Activated naive CD4-positive, alpha-beta T cell treated with anti-CD3 and anti-CD28 coated beads for 36 hours (primary cell): ENCODE measurements at regions of chr7 and their contacts with region 1.

Region 1: DNA sequence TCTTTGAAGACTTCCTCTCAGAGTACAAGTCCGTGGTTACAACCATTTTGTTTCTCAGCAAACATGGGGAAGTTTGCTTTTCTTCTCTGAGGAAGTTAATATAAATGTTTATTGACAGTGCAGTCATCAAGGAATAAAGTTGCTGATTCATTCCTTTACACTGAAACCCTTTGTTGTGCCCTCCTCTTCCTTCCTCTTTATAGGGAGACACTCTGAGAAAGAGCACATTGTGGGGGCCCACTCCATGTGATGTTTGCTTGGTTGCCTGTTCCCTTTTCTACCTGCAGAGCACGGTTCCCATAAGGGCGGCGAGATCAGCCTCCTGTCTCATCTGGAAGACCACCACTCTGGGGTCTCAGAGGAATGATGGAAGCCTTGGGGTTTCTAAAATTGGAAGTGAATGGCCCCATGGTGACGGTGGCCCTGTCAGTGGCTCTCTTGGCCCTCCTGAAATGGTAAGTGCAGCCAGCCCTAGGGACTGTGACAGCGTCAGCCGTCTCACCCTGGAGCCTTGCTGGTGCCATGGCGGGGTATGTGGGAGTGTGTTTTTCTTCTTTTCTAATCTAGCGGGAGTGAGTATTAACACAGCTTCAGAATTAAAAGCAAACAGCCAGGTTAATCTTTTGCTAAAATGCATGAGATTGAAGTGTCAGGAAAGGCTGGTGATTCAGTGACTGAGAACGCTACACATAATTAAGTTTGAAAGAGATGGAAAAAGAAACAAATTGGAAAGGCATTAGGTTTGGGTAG is at the start of gene TBXAS1:
- DNase-seq: peak; percentile 14
- H3K4me3 Mint-ChIP-seq: peak within 1 kb of the TSS; percentile 50
- H3K27ac Mint-ChIP-seq: peak within 1 kb of the TSS; percentile 77
- H3K4me1 Mint-ChIP-seq: peaks cover 24% of the 10 kb centered on the region
- H3K27me3 Mint-ChIP-seq: peaks cover 4% of the 10 kb centered on the region
- total RNA-seq, gene TBXAS1: 0.83 to 1.1 TPM

Region 2: GRCh38 chr7:139505563-139505962 is 323.6 kb before region 1 on chr7:
- CTCF ChIA-PET with region 1: no interaction called
- intact Hi-C with region 1: loop called (anchors 10 kb)
- DNase-seq: peak; percentile 50
- H3K4me3 Mint-ChIP-seq: no peak overlapping the region
- H3K27ac Mint-ChIP-seq: no peak overlapping the region
- H3K4me1 Mint-ChIP-seq: no peaks in the 10 kb centered on the region
- H3K27me3 Mint-ChIP-seq: no peaks in the 10 kb centered on the region

Region 3: GRCh38 chr7:139602143-139602722 is 227.0 kb before region 1 on chr7:
- CTCF ChIA-PET with region 1: interaction called, 4 read pairs
- intact Hi-C with region 1: loop called (anchors 1 kb)
- DNase-seq: no peak
- H3K4me3 Mint-ChIP-seq: no peak overlapping the region
- H3K27ac Mint-ChIP-seq: no peak overlapping the region
- H3K4me1 Mint-ChIP-seq: no peaks in the 10 kb centered on the region
- H3K27me3 Mint-ChIP-seq: no peaks in the 10 kb centered on the region

Region 4: DNA sequence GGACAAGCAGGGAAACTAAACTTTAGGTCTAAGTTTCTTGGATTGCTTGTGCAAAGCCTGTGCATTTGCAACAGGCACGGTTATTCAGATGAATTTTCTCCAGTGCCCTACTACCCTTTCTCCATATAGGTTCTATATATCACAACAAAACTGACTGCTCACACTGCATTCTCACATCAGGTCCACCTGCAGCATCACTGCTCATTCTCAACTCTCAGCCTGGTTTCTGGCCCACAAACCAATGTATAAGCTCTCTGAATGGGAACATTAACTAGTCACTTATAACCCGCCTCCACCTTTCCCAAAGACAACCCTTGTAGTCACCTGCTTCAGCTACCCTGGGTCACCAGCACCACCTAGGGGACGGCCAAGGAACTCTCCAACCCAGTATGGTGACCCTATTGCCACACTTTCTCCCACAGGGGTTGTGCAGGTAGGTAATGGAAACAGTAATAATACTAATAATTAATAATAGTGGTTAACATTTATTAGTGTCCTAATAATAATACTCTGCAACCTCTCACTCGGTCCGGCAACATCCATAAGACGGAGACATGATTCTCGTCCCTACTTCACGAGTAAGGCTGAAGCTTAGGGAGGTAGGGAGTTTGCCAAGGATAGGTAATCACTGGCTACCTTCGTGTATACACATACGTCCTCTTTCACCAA is 208.4 kb before region 1 on chr7:
- CTCF ChIA-PET with region 1: interaction called, 3 read pairs
- intact Hi-C with region 1: loop called (anchors 1 kb)
- DNase-seq: peak; percentile 77
- H3K4me3 Mint-ChIP-seq: no peak overlapping the region
- H3K27ac Mint-ChIP-seq: no peak overlapping the region
- H3K4me1 Mint-ChIP-seq: peaks cover 21% of the 10 kb centered on the region
- H3K27me3 Mint-ChIP-seq: no peaks in the 10 kb centered on the region

Region 5: DNA sequence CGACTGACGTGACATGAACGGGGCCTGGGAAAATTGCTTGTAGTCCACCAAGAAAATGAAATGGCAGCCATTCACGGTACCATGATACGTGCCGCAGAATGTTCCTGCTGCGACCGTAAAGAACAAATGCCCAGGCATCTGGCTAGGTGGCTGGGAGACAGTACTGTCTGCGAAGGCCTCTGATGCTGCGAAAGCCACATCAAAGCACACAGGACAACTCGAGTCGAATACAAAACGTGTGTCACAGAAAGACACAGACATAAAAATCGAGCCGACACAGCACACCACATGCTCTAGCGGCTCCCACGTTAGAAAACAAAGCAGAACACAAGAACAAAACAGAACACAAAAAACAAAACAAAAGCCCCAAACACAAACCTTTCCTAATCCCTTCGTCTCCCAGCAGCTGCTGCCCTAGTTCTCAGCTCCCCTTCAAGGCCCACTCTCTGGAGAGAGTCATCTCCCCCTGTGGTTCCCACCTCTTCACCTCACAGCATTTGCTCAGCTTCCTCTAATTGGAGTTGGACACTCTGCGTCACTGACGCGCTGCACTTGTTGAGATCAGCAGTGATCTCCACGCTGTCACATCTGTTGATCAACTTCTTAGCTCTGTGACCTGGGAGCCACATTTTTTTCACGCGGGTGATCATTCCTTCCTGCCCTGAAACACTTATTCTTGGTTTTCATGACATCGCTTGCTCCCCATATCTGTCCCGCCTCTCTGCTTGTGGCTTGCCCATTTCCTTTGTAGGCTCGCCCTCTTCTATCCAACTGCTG is 193.5 kb before region 1 on chr7:
- CTCF ChIA-PET with region 1: interaction called, 3 read pairs
- intact Hi-C with region 1: loop called (anchors 2 kb)
- DNase-seq: peak; percentile 85
- H3K4me3 Mint-ChIP-seq: peak overlapping the region; percentile 72
- H3K27ac Mint-ChIP-seq: peak overlapping the region; percentile 77
- H3K4me1 Mint-ChIP-seq: peaks cover 61% of the 10 kb centered on the region
- H3K27me3 Mint-ChIP-seq: no peaks in the 10 kb centered on the region

Region 6: DNA sequence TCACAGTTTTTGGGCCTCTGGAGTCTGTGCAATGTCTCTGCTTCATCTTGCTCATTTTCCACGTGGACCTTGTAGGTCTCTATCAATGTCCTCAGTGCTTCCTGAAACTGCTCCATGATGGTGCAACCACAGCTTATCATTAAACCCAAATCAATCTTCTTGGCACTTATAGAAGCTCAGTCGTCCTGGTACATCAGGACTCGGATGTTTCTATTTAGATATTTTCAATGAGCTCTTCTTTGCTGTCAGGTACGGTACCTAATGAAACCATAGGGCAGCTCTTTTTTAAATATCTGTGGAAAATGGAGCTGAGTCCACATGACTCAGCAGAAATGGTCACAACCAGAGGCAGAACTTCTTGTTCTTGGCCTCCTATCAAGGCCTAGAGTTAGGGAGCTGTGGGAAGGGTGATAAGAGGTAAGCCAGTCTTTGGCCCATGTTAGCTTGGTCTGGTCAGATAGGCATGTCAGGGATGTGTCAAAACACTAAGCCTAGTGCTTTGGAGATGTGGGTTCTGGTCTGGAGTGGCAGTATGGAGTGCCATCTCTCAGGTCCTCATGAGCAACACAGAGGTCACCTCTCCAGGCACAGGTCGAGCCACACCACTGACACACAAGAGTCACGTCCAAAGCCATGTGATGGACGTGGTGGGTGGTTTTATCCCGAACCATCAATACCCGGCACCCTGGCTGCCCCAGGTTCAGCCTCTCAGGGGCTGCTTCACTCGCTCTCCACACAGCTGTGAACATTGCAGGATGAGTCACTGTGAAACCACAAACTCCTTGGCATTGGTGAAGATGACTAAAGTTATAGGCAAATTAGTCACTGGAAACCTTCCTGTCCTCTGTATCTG is 86.9 kb after region 1 on chr7:
- CTCF ChIA-PET with region 1: interaction called, 3 read pairs
- intact Hi-C with region 1: loop called (anchors 1 kb)
- DNase-seq: peak; percentile 87
- H3K4me3 Mint-ChIP-seq: no peak overlapping the region
- H3K27ac Mint-ChIP-seq: peak overlapping the region; percentile 19
- H3K4me1 Mint-ChIP-seq: peaks cover 24% of the 10 kb centered on the region
- H3K27me3 Mint-ChIP-seq: peaks cover 2% of the 10 kb centered on the region